ENCODE measurements at regions of chr17 and their contacts with region 1.

Region 1: DNA sequence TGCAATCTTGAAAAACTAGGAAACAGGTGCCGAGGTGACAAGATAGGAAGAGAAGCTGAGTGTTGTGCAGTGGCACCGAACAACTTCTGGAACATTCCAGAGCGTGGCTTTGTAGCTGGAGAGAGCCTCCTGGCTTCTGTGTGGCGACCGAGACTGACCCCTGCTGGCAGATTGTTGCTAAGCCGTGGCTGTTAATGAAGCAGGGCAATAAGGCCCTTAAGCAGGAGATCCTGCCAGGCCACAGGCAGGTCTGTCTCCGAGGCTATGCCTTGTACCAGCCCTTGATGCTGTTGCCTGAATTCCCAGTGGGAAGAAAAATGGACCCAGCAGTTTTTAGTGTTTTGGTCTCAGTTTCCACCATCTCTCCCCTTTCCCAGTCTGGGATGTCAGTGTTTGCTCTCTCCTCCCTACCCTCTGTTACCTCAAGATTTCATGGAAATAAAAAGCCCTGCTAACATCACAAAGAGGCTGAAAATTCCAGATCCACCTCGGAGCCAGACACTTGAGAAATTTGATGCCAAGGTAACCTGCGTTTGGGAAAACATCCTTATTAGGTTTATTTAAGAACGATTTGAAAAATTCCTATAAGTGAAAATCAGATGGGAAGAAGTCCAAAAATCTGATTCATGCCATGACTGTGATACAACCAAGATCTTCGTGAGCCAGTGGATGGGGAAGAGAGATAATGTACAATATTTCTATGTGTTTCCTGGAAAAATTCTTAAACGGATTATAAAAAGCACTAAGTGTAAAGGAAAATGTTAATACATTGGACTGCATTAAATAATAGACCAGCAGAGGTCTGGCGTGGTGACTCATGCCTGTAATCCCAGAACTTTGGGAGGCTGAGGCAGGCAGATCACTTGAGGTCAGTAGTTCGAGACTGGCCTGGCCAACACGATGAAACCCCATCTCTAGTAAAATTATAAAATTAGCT is 265.1 kb downstream of the PRKCA start:
- DNase-seq: peak; percentile 83
- H3K4me3 Mint-ChIP-seq: no peak overlapping the region
- H3K27ac Mint-ChIP-seq: no peak overlapping the region
- H3K4me1 Mint-ChIP-seq: peaks cover 20% of the 10 kb centered on the region
- H3K27me3 Mint-ChIP-seq: no peaks in the 10 kb centered on the region

Region 2: GRCh38 chr17:66200685-66201092 is 366.8 kb before region 1 on chr17:
- CTCF ChIA-PET with region 1: interaction called, 10 read pairs
- POLR2A ChIA-PET with region 1: no interaction called
- DNase-seq: peak; percentile 51
- H3K4me3 Mint-ChIP-seq: no peak overlapping the region
- H3K27ac Mint-ChIP-seq: no peak overlapping the region
- H3K4me1 Mint-ChIP-seq: peaks cover 17% of the 10 kb centered on the region
- H3K27me3 Mint-ChIP-seq: no peaks in the 10 kb centered on the region

Region 3: GRCh38 chr17:66255112-66255511 is 312.4 kb before region 1 on chr17:
- CTCF ChIA-PET with region 1: interaction called, 14 read pairs
- POLR2A ChIA-PET with region 1: interaction called, 4 read pairs
- DNase-seq: peak; percentile 35
- H3K4me3 Mint-ChIP-seq: no peak overlapping the region
- H3K27ac Mint-ChIP-seq: peak overlapping the region; percentile 32
- H3K4me1 Mint-ChIP-seq: peaks cover 20% of the 10 kb centered on the region
- H3K27me3 Mint-ChIP-seq: no peaks in the 10 kb centered on the region

Region 4: DNA sequence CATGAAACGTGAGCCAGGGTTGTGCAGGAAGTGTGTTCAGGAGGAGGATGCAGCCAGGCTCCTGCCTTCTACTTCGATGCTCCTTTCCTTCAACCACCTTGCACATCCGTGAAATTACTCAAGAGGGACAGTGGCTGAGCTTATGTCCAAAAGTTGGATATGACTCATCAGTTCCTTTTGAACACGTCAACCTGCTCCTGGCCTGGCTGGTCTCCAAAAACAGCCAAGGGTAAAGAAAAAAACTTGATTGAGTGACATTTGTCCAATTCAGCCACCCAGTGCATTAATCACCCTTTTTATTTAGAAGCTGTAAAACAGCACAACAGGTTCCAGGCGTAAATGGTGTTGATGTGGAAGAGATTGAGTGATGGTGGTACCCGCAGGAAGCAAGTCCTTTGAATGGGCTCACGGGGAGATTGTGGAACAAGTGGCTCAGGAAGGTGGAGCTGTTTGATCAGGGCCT is 93.9 kb after region 1 on chr17:
- CTCF ChIA-PET with region 1: no interaction called
- POLR2A ChIA-PET with region 1: no interaction called
- DNase-seq: no peak
- H3K4me3 Mint-ChIP-seq: no peak overlapping the region
- H3K27ac Mint-ChIP-seq: no peak overlapping the region
- H3K4me1 Mint-ChIP-seq: peaks cover 17% of the 10 kb centered on the region
- H3K27me3 Mint-ChIP-seq: no peaks in the 10 kb centered on the region

Region 5: GRCh38 chr17:66715745-66716156 is 148.2 kb after region 1 on chr17:
- CTCF ChIA-PET with region 1: no interaction called
- POLR2A ChIA-PET with region 1: no interaction called
- DNase-seq: peak; percentile 25
- H3K4me3 Mint-ChIP-seq: no peak overlapping the region
- H3K27ac Mint-ChIP-seq: peak overlapping the region; percentile 82
- H3K4me1 Mint-ChIP-seq: peaks cover 54% of the 10 kb centered on the region
- H3K27me3 Mint-ChIP-seq: no peaks in the 10 kb centered on the region